MCF 10A (cell line): ENCODE measurements at regions of chr4 and their contacts with region 1.

Region 1: GRCh38 chr4:31083456-31083855 is 363.3 kb downstream of the PCDH7 start:
- DNase-seq: no peak
- H3K4me3 Mint-ChIP-seq: no peak overlapping the region
- H3K27ac Mint-ChIP-seq: no peak overlapping the region
- H3K4me1 Mint-ChIP-seq: peaks cover 11% of the 10 kb centered on the region
- H3K27me3 Mint-ChIP-seq: no peaks in the 10 kb centered on the region
- CTCF ChIP-seq: no peak

Region 2: GRCh38 chr4:31065086-31065485 is 18.4 kb before region 1 on chr4:
- CTCF ChIA-PET with region 1: interaction called, 10 read pairs
- POLR2A ChIA-PET with region 1: no interaction called
- intact Hi-C with region 1: no loop called
- DNase-seq: no peak
- H3K4me3 Mint-ChIP-seq: no peak overlapping the region
- H3K27ac Mint-ChIP-seq: no peak overlapping the region
- H3K4me1 Mint-ChIP-seq: no peaks in the 10 kb centered on the region
- H3K27me3 Mint-ChIP-seq: no peaks in the 10 kb centered on the region
- CTCF ChIP-seq: no peak